Calu3 (cell line): ENCODE measurements at regions of chr5 and their contacts with region 1.

Region 1: GRCh38 chr5:33936004-33936380 is 194 bp upstream of the RXFP3 start:
- DNase-seq: peak; percentile 4
- H3K4me3 Mint-ChIP-seq: no peak overlapping the region
- H3K27ac Mint-ChIP-seq: no peak overlapping the region
- H3K4me1 Mint-ChIP-seq: peaks cover 9% of the 10 kb centered on the region
- H3K27me3 Mint-ChIP-seq: peaks cover 43% of the 10 kb centered on the region
- CTCF ChIP-seq: no peak

Region 2: DNA sequence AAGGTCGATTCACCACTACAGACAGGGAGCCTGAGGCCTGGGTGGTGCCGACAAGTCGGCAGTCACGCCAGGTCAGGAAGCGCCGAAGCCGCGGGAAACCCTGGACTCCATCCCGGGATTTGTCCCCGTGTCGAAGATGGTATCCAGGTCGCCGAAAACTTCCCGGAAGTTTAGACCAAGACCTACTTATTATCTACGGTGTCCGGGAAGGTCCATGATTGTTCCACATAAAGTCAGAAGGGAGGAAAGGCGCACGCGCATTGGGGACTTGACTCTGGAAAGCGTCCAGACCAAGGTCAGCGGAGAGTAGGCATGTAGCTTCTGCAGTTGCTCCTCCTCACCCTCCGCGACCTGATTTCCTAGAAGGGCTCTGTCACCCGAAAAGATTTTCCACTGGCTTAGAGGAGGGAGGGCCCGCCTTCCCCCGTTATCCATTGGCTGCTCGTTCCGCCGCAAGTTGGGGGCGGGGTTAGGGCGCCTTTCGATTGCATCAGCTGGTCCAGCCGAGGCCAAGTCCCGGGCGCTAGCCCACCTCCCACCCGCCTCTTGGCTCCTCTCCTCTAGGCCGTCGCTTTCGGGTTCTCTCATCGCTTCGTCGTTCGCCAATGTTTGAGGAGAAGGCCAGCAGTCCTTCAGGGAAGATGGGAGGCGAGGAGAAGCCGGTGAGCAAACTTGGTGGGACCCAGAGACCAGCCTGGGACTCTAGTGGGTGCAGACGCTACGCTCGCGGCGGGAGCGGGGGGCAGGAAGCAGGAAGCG is 495.3 kb before region 1 on chr5 and contains the start of gene TARS1:
- CTCF ChIA-PET with region 1: interaction called, 14 read pairs
- intact Hi-C with region 1: loop called (anchors 1 kb)
- DNase-seq: peak; percentile 96
- H3K4me3 Mint-ChIP-seq: no peak within 1 kb of the TSS
- H3K27ac Mint-ChIP-seq: no peak within 1 kb of the TSS
- H3K4me1 Mint-ChIP-seq: peaks cover 27% of the 10 kb centered on the region
- H3K27me3 Mint-ChIP-seq: no peaks in the 10 kb centered on the region
- CTCF ChIP-seq: no peak
- total RNA-seq, gene TARS1: 168 and 201 TPM in 2 replicates

Region 3: DNA sequence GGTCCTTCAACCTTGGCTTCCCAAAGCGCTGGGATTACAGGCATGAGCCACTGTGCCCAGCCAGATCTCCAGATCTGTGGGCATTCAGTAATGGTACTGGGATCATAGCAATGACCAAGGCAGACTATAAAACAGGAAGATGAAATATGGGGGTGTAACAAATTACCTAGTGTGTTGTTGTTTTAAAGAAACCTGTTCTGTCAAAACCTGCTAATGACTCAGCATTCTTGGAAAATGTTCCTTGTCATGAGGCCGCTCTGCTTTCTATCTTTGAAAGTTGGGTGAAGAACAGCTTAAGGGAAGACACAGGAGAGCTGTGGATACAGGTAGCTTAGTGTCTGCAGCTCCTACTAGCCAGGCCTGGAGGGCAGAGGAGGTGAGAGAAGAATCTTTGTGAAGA is 475.8 kb before region 1 on chr5:
- CTCF ChIA-PET with region 1: no interaction called
- intact Hi-C with region 1: no loop called
- DNase-seq: no peak
- H3K4me3 Mint-ChIP-seq: no peak overlapping the region
- H3K27ac Mint-ChIP-seq: peak overlapping the region; percentile 23
- H3K4me1 Mint-ChIP-seq: no peaks in the 10 kb centered on the region
- H3K27me3 Mint-ChIP-seq: no peaks in the 10 kb centered on the region
- CTCF ChIP-seq: no peak

Region 4: DNA sequence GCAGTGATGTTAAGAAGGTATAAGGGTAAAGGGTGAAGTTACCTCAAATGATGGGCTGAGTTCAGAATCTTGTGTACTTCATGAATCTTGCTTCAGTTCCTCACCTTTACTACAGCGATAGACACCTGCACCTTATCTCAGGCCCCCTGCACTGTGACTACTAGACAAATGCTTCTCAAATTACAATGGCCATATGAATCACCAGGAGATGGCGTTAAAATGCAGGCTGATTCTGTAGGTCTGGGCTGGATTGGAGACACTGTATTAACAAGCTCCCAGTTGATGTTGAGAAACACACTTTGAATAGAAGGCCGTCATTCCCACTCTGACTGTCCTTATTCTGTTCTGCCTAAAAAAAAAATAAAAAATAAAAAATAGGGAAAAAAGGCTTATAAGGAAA is 465.4 kb before region 1 on chr5:
- CTCF ChIA-PET with region 1: interaction called, 9 read pairs
- intact Hi-C with region 1: loop called (anchors 1 kb)
- DNase-seq: peak; percentile 19
- H3K4me3 Mint-ChIP-seq: no peak overlapping the region
- H3K27ac Mint-ChIP-seq: no peak overlapping the region
- H3K4me1 Mint-ChIP-seq: peaks cover 8% of the 10 kb centered on the region
- H3K27me3 Mint-ChIP-seq: no peaks in the 10 kb centered on the region
- CTCF ChIP-seq: peak; percentile 33

Region 5: DNA sequence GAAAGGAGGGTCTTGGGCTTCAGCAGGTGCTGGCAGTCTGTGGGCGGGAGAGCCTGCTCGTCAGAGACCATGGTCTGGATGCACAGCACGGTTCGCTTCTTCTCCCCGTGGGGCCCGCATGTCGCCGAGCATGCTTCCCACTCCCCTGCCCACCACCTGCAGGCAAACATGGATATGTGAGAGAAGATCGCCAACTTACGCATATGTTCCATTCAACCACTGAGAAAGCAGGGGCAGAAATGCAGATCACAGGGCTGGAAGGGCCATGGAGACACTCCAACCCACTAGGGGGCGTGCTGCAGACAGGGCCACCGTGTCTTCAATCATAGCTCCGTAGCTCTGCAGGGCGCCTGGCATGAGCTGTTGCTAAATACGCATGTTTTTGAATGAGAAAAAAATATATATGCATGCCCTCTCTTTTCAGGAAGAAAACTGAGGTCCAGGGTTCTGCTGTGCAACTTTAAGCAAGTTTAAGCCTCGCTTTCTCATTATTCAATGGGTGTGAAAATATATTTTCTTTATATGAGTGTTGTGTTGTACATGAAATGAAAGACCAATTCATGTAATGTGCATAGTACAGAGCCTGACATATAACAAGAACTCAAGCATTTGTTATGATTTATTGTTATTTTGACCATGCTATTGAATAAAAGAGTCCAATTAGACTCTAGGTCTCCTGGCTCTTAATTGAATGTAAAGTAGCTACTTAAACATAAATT is 347.2 kb before region 1 on chr5:
- CTCF ChIA-PET with region 1: interaction called, 3 read pairs
- intact Hi-C with region 1: loop called (anchors 10 kb)
- DNase-seq: peak; percentile 46
- H3K4me3 Mint-ChIP-seq: no peak overlapping the region
- H3K27ac Mint-ChIP-seq: no peak overlapping the region
- H3K4me1 Mint-ChIP-seq: no peaks in the 10 kb centered on the region
- H3K27me3 Mint-ChIP-seq: no peaks in the 10 kb centered on the region
- CTCF ChIP-seq: no peak

Region 6: DNA sequence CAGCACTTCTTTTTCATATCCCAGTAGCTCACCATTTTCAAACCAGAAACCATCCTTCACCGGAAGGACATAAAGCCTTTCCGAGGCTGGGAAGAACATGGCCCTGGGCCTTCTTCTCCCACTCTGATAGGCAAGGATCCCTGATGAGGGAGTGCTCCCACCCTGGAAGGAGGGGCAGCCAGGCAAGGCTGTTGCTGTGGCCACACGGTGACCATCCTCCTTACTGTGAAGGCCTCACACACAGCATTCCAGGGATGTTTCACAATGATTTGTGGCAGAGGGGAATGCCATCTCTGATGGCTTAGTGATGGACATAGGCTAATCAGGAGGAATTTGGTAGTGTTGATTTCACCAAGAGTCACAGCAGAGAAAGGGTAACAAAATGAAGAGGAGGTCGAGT is 174.9 kb before region 1 on chr5:
- CTCF ChIA-PET with region 1: no interaction called
- intact Hi-C with region 1: loop called (anchors 10 kb)
- DNase-seq: no peak
- H3K4me3 Mint-ChIP-seq: no peak overlapping the region
- H3K27ac Mint-ChIP-seq: no peak overlapping the region
- H3K4me1 Mint-ChIP-seq: no peaks in the 10 kb centered on the region
- H3K27me3 Mint-ChIP-seq: no peaks in the 10 kb centered on the region
- CTCF ChIP-seq: no peak

Region 7: GRCh38 chr5:33891788-33892619 is 44.0 kb before region 1 on chr5 and contains the start of gene ADAMTS12:
- CTCF ChIA-PET with region 1: no interaction called
- intact Hi-C with region 1: loop called (anchors 5 kb)
- DNase-seq: peak; percentile 14
- H3K4me3 Mint-ChIP-seq: peak within 1 kb of the TSS; percentile 67
- H3K27ac Mint-ChIP-seq: no peak within 1 kb of the TSS
- H3K4me1 Mint-ChIP-seq: peaks cover 27% of the 10 kb centered on the region
- H3K27me3 Mint-ChIP-seq: no peaks in the 10 kb centered on the region
- CTCF ChIP-seq: no peak
- total RNA-seq, gene ADAMTS12: 1.2 TPM in 2 replicates

Region 8: GRCh38 chr5:33969572-33970452 is 33.8 kb after region 1 on chr5:
- CTCF ChIA-PET with region 1: interaction called, 12 read pairs
- intact Hi-C with region 1: no loop called
- DNase-seq: peak; percentile 34
- H3K4me3 Mint-ChIP-seq: no peak overlapping the region
- H3K27ac Mint-ChIP-seq: no peak overlapping the region
- H3K4me1 Mint-ChIP-seq: no peaks in the 10 kb centered on the region
- H3K27me3 Mint-ChIP-seq: peaks cover 8% of the 10 kb centered on the region
- CTCF ChIP-seq: peak; percentile 69